ENCODE measurements at regions of chr10 and their contacts with region 1.

Region 1: GRCh38 chr10:77240706-77241349 is 396.8 kb downstream of the KCNMA1 start:
- H3K4me3 ChIP-seq: no peak overlapping the region
- H3K27ac ChIP-seq: peak overlapping the region; percentile 27; the same call in 1 of the 2 replicates
- H3K4me1 ChIP-seq: peaks cover 7% of the 10 kb centered on the region
- CTCF ChIP-seq: no peak

Region 2: DNA sequence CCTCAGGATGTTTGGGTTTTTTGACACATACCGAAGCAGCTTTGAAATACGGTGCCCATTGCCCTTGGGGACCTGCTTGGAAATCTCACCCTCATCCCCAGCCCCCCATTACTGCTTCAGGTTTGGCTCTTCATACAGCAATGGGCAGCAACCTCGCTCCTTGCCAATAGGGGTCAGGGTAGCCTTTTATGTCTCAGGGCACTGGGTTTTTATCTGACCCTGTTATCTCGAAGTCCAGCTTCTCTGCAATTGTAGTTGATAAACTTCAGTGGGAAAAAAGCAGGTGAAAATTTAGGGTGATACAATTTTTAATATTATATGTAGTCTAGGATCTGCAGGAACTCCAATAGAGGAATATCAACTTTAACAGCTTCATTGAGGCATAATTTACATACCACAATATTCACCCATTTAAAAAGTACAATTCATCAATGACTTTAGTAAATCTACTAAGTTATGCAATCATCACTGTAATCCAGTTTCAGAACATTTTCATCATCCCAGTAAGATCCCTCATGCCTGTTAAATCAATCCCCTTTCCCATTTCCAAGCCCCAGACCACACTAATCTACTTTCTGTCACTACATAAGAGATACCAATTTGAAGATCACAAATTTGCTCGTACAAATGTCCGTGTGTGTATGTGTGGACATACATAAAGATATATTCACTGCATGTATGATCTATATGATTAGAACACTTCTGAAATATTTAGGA is 10.6 kb after region 1 on chr10:
- CTCF ChIA-PET with region 1: interaction called, 15 read pairs
- POLR2A ChIA-PET with region 1: no interaction called
- H3K4me3 ChIP-seq: no peak overlapping the region
- H3K27ac ChIP-seq: no peak overlapping the region
- H3K4me1 ChIP-seq: peaks cover 12% of the 10 kb centered on the region
- CTCF ChIP-seq: peak; percentile 73

Measured in HEK293 (cell line).